ENCODE measurements at regions of chr17 and their contacts with region 1.

Region 1: DNA sequence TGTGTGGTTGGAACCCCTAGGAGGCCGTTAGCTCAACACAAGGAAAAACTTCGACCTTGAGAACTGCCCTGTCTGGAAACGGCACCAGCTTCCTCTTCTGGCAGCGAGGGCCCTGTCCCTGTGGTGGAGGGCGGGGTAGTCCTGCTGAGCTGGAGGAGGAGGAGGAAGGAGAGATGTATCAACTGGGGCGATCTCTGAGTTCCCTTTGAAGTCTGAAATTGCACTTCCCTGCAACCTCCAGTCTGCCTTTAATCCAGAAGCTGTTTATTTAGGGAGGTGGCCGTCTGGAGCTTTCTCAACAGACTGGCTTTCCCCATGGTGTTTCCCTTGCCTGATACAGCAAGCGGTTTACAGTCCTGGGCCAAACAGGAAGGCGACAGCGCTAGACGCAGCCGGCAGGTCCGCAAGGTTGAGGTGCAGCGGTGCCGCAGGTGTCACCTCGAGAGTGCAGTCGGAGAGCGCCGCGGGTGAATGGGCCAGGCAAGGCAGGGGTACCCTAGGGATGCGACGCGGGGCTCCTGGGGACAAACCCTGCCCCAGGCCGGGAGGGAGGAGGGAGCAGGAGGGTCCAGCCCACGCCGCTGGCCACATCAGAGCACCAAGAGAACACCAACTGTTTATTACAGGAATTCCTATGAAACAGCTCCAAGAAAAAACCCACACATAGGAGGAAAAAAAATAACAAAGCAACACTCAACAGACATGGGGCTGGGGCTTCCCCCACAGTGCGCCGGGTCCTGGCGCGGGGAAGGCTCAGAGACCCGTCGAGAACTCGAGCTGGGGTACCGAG is 11.4 kb upstream of the MRPS23 start:
- DNase-seq: no peak
- H3K4me3 ChIP-seq: peak overlapping the region; percentile 52
- H3K27ac ChIP-seq: peak overlapping the region; percentile 68
- H3K27me3 ChIP-seq: no peaks in the 10 kb centered on the region
- CTCF ChIP-seq: no peak

Region 2: GRCh38 chr17:57803025-57803424 is 58.2 kb before region 1 on chr17:
- CTCF ChIA-PET with region 1: no interaction called
- POLR2A ChIA-PET with region 1: no interaction called
- DNase-seq: no peak
- H3K4me3 ChIP-seq: no peak overlapping the region
- H3K27ac ChIP-seq: no peak overlapping the region
- H3K27me3 ChIP-seq: peaks cover 9% of the 10 kb centered on the region
- CTCF ChIP-seq: no peak

Region 3: DNA sequence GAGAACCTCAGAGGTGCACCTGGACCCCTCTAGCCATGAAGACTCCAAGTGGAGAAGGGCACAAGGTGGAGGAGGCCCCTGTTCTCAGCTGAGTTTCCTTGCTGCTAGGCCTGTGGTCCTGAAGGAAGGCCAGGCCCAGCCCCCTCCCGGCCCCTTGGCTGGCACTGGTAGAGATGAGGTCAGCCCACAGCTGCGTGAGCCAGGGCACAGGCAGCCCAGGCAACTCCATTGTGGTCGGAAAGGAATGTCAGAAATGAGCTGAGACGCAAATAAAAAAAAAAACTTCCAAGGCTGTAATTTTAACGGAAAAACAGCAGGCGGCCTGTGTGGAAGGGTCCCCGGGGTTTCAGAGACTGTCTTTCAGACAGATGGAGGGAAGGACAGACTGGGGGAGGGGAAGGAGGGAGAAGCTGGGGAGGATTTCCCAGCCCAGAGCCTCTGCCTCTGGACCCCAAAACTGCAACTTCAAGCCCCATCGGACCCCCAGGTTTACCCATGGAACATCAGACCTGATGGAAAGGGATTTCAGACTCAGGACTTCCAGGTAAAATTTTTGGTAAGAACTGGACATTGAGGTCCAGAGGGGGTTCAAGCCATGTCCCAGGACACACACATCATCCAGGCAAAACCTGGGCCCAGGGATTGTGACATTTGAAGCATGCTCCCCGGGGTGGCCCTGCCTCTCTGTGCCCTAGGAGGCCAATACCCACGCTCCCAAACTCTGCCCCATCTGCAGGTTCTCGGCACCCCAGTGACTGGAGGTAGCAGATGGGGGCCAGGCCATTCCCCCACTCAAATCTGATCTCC is 14.3 kb after region 1 on chr17:
- CTCF ChIA-PET with region 1: interaction called, 17 read pairs
- POLR2A ChIA-PET with region 1: interaction called, 43 read pairs
- DNase-seq: peak; percentile 97
- H3K4me3 ChIP-seq: peak overlapping the region; percentile 42
- H3K27ac ChIP-seq: peak overlapping the region; percentile 100
- H3K27me3 ChIP-seq: no peaks in the 10 kb centered on the region
- CTCF ChIP-seq: peak; percentile 79

Region 4: GRCh38 chr17:57946798-57947358 is 85.7 kb after region 1 on chr17:
- CTCF ChIA-PET with region 1: interaction called, 11 read pairs
- POLR2A ChIA-PET with region 1: interaction called, 6 read pairs
- DNase-seq: peak; percentile 55
- H3K4me3 ChIP-seq: peak overlapping the region; percentile 53
- H3K27ac ChIP-seq: peak overlapping the region; percentile 81
- H3K27me3 ChIP-seq: no peaks in the 10 kb centered on the region
- CTCF ChIP-seq: no peak

Region 5: GRCh38 chr17:57987580-57988421 is 126.6 kb after region 1 on chr17 and contains the start of gene VEZF1:
- CTCF ChIA-PET with region 1: interaction called, 661 read pairs
- POLR2A ChIA-PET with region 1: interaction called, 6 read pairs
- DNase-seq: no peak
- H3K4me3 ChIP-seq: peak within 1 kb of the TSS; percentile 79
- H3K27ac ChIP-seq: peak within 1 kb of the TSS; percentile 96
- H3K27me3 ChIP-seq: no peaks in the 10 kb centered on the region
- CTCF ChIP-seq: no peak
- polyA plus RNA-seq, gene VEZF1: 34.2 and 38.9 TPM in 2 replicates

Region 6: GRCh38 chr17:58112970-58113631 is 251.9 kb after region 1 on chr17:
- CTCF ChIA-PET with region 1: interaction called, 12 read pairs
- POLR2A ChIA-PET with region 1: no interaction called
- DNase-seq: no peak
- H3K4me3 ChIP-seq: no peak overlapping the region
- H3K27ac ChIP-seq: peak overlapping the region; percentile 11
- H3K27me3 ChIP-seq: peaks cover 9% of the 10 kb centered on the region
- CTCF ChIP-seq: peak; percentile 96

Measured in AG04450 (cell line).